ENCODE measurements at regions of chr4 and their contacts with region 1.

Region 1: DNA sequence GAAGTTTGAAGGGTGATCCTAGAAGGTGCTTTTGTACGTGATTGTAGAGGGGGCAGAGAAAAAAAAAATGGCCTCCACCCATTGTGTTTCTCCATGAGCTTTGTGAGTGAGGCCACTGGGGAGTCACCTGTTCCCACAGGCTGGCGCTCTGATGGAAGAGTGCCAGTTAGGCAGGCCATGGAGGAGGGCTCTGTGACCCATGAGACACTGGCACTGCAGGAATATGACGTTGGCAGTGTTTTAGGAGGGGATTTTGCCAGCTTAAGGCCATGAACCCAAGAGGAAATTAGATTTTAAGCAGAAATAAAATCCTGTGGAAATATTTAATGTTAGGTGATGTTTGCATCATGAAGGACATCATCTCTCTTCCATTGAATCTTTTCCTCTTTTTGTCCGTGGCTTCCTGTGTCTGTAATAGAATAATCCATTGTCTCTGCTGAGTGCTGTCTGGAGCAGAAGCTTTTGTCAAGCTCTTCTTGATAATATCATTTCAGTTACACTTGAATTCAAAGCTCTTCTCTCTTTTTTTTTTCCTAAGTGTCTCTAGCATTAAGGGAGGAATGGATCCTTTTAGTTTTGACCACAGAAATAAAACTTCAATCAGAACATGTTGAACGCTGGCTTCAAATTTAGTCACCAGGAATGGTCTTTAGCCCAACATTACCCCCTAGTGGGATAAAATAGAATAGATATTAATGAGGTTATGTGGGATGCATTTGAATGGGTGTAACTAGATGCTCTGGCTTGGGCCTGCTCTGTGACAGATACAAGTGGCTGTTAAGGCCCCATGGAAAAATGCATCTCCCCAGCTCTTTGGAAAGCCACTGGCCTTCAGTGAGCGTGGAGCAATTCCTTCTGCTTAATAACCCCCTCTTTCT is 41.0 kb upstream of the UCP1 start:
- DNase-seq: peak; percentile 75
- H3K4me3 ChIP-seq: no peak overlapping the region
- H3K27ac ChIP-seq: no peak overlapping the region
- H3K4me1 ChIP-seq: peaks cover 3% of the 10 kb centered on the region
- H3K27me3 ChIP-seq: peaks cover 0 to 11% of the 10 kb centered on the region in 2 experiments
- CTCF ChIP-seq: peak; percentile 20 to 36
- POLR2A ChIP-seq: no peak

Region 2: GRCh38 chr4:140373328-140374129 is 236.3 kb before region 1 on chr4 and contains the start of gene SCOC:
- CTCF ChIA-PET with region 1: interaction called, 10 read pairs
- POLR2A ChIA-PET with region 1: no interaction called
- dilution Hi-C with region 1: no loop called
- intact Hi-C with region 1: no loop called
- DNase-seq: peak; percentile 100
- H3K4me3 ChIP-seq: peak within 1 kb of the TSS; percentile 76 to 92 (median 79)
- H3K27ac ChIP-seq: peak within 1 kb of the TSS; percentile 71
- H3K4me1 ChIP-seq: peaks cover 14% of the 10 kb centered on the region
- H3K27me3 ChIP-seq: no peaks in the 10 kb centered on the region
- CTCF ChIP-seq: no peak
- POLR2A ChIP-seq: peak; percentile 80
- total RNA-seq, gene SCOC: 38.3 and 38.5 TPM in 2 replicates

Region 3: GRCh38 chr4:140427106-140427961 is 182.5 kb before region 1 on chr4 and contains the start of gene CLGN:
- CTCF ChIA-PET with region 1: interaction called, 14 read pairs
- POLR2A ChIA-PET with region 1: no interaction called
- dilution Hi-C with region 1: no loop called
- intact Hi-C with region 1: loop called (anchors 1 kb)
- DNase-seq: peak; percentile 78
- H3K4me3 ChIP-seq: peak within 1 kb of the TSS; percentile 30 to 64 (median 48)
- H3K27ac ChIP-seq: no peak within 1 kb of the TSS
- H3K4me1 ChIP-seq: peaks cover 9% of the 10 kb centered on the region
- H3K27me3 ChIP-seq: peaks cover 14 to 34% of the 10 kb centered on the region in 2 experiments
- CTCF ChIP-seq: peak; percentile 58 to 68
- POLR2A ChIP-seq: no peak
- total RNA-seq, gene CLGN: 0.60 and 1.00 TPM in 2 replicates

Region 4: DNA sequence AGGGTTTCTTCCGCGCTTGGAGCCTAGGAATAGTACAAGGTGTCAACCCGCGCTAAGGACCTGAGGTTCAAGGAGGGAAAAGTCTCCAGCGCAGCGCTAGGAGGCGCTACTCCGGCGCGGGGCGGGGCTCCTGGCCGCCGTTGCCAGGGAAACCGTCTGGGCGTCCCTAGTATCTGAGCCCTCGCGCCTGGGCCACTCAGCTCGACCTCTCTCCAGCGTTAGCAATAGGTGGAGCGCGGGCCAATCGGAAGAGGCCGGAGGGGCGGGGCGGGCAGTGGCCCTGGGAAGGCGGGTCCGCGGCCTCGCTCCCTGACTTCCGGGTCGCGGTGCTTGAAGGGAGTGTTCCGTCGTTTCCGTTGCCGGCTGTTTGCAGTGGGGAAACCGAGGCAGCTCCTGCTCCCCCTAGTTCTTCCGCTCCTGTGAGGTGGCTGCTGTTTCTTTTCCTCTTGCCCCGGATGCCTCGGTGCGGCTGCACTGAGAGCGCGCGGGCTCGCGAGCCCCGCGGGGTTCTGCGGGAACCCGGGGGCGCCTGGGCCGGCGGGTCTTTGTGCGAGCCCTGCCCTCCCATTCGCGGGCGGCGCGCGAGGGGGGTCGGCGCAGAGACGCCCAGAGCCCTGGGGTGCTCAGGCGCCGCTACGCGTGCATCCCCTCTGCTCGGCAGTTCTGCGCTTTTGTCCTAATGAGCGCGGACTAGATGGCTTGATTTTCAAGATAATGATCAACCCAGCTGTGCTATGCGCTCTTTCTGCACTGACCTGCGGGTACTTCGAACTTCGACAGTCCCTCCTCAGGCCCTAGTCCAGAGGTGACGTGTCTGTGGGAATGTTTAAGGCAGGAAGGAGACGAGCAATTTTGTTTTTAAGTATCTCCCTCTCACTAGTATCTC is 85.7 kb before region 1 on chr4 and contains the start of gene ELMOD2:
- CTCF ChIA-PET with region 1: interaction called, 6 read pairs
- POLR2A ChIA-PET with region 1: no interaction called
- dilution Hi-C with region 1: no loop called
- intact Hi-C with region 1: loop called (anchors 2 kb)
- DNase-seq: peak; percentile 97
- H3K4me3 ChIP-seq: peak within 1 kb of the TSS; percentile 38 to 87 (median 83)
- H3K27ac ChIP-seq: peak within 1 kb of the TSS; percentile 21
- H3K4me1 ChIP-seq: peaks cover 14% of the 10 kb centered on the region
- H3K27me3 ChIP-seq: peaks cover 0 to 2% of the 10 kb centered on the region in 2 experiments
- CTCF ChIP-seq: peak; percentile 97 to 99
- POLR2A ChIP-seq: peak; percentile 80
- total RNA-seq, gene ELMOD2: 20.5 and 23.6 TPM in 2 replicates

Region 5: DNA sequence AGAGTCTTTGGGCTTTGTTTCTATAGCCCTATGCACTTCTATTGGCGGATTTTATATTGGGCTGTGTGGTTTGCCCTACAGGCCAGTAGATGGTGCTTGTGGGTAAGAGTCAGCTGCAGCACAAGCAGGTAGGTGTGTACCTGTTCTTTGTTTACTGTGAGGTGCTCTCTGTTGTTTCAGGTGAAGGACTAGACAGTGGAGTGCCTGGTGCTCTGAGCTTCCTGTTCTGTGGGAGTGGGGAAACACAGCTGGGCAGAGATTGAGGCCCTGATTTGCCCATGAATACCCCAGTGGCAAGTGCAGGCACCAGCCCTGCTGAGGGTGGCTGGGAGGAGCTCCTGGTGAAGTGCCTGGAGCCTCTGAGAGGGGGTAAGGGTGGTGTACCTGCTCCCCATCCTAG is 14.7 kb before region 1 on chr4:
- CTCF ChIA-PET with region 1: interaction called, 25 read pairs
- POLR2A ChIA-PET with region 1: no interaction called
- dilution Hi-C with region 1: no loop called
- intact Hi-C with region 1: no loop called
- DNase-seq: peak; percentile 21
- H3K4me3 ChIP-seq: no peak overlapping the region
- H3K27ac ChIP-seq: no peak overlapping the region
- H3K4me1 ChIP-seq: no peaks in the 10 kb centered on the region
- H3K27me3 ChIP-seq: peaks cover 6 to 19% of the 10 kb centered on the region in 2 experiments
- CTCF ChIP-seq: peak; percentile 35 to 47
- POLR2A ChIP-seq: no peak

Region 6: DNA sequence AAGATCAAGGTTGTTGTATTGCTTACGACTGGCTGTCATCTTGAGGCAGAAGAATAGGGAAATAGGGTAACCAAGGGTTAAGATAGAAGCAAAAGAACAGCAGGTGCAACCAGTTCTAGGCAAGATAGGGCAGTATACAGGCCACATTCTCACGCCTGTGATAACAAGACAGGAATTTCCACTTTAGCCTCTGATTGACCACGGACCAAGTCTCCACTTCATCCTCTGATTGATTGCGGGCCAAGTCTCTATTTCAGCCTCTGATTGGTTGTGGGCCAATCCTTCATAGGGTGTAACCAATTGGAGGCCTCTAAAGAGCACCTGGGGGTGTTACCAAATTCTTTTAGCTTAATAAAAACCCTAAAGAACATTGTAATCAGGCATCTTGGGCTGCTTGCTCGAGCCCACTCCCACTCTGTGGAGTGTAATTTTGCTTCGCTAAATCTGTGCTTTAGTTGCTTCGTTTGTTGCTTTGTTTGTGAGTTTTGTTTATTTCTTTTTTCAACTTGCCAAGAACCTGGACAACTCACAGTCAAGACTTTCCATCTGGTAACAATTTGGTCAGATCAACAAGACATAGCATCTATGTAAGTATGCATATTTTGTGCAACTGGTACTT is 155.1 kb after region 1 on chr4:
- CTCF ChIA-PET with region 1: no interaction called
- POLR2A ChIA-PET with region 1: no interaction called
- dilution Hi-C with region 1: no loop called
- intact Hi-C with region 1: no loop called
- DNase-seq: no peak
- H3K4me3 ChIP-seq: no peak overlapping the region
- H3K27ac ChIP-seq: no peak overlapping the region
- H3K4me1 ChIP-seq: no peaks in the 10 kb centered on the region
- H3K27me3 ChIP-seq: no peaks in the 10 kb centered on the region
- CTCF ChIP-seq: no peak
- POLR2A ChIP-seq: no peak

Measured in endothelial cell of umbilical vein (primary cell).